Activated B cell treated with CpG ODN at 0.5 μM for 24 hours (primary cell): ENCODE measurements at regions of chr1 and their contacts with region 1.

Region 1: GRCh38 chr1:103514920-103515503 is 10.5 kb upstream of the RNPC3 start:
- DNase-seq: no peak
- ATAC-seq: peak; percentile 73
- H3K4me3 Mint-ChIP-seq: no peak overlapping the region
- H3K27ac Mint-ChIP-seq: no peak overlapping the region
- H3K4me1 Mint-ChIP-seq: peaks cover 7% of the 10 kb centered on the region
- H3K27me3 Mint-ChIP-seq: no peaks in the 10 kb centered on the region
- CTCF ChIP-seq: peak; percentile 68

Region 2: DNA sequence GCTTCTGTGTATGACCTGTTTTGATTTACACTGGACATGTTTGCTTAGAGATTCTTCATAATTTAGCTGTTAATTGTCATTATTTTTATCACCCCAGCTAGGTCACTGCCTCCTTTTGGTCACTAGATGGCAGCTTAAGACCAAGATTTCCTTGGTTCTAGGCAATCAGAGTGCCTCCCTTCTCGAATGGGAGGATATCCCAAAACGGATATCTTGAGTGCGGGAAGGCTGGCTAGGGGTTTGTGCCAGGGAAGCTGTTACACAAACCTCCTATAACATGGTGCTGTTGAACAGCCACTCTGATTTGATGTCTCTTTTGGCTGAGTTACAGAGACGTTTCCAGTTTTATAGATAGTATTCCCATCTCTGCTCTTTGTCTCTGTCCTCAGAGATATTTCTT is 1994.7 kb before region 1 on chr1:
- CTCF ChIA-PET with region 1: interaction called, 4 read pairs
- POLR2A ChIA-PET with region 1: no interaction called
- intact Hi-C with region 1: loop called (anchors 1 kb)
- DNase-seq: no peak
- ATAC-seq: no peak
- H3K4me3 Mint-ChIP-seq: no peak overlapping the region
- H3K27ac Mint-ChIP-seq: no peak overlapping the region
- H3K4me1 Mint-ChIP-seq: peaks cover 6% of the 10 kb centered on the region
- H3K27me3 Mint-ChIP-seq: peaks cover 11% of the 10 kb centered on the region
- CTCF ChIP-seq: no peak

Region 3: GRCh38 chr1:102550729-102551384 is 964.2 kb before region 1 on chr1:
- CTCF ChIA-PET with region 1: no interaction called
- POLR2A ChIA-PET with region 1: no interaction called
- intact Hi-C with region 1: loop called (anchors 2 kb)
- DNase-seq: no peak
- ATAC-seq: no peak
- H3K4me3 Mint-ChIP-seq: no peak overlapping the region
- H3K27ac Mint-ChIP-seq: no peak overlapping the region
- H3K4me1 Mint-ChIP-seq: no peaks in the 10 kb centered on the region
- H3K27me3 Mint-ChIP-seq: no peaks in the 10 kb centered on the region
- CTCF ChIP-seq: no peak

Region 4: DNA sequence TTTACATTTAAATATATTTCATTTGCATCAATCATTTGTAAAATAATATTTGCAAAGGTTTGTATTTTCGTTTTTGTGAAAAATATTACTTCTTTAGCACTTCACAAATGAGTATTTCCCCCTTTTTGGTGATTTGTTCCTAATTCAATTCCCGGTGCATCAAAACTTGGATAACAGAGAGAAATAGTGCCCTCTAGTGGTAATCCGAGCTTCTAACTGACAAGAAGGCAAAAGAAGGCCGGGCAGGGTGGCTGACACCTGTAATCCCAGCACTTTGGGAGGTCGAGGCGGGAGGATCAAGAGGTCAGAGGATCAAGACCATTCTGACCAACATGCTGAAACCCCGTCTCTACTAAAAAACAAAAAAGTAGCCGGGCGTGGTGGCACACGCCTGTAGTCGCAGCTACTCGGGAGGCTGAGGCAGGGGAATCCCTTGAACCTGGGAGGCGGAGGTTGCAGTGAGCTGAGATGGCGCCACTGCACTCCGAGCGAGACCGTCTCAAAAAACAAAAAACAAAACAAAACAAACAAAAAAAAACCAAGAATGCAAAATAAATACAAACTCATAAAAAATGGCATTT is 544.4 kb before region 1 on chr1:
- CTCF ChIA-PET with region 1: no interaction called
- POLR2A ChIA-PET with region 1: no interaction called
- intact Hi-C with region 1: loop called (anchors 10 kb)
- DNase-seq: no peak
- ATAC-seq: no peak
- H3K4me3 Mint-ChIP-seq: no peak overlapping the region
- H3K27ac Mint-ChIP-seq: no peak overlapping the region
- H3K4me1 Mint-ChIP-seq: no peaks in the 10 kb centered on the region
- H3K27me3 Mint-ChIP-seq: no peaks in the 10 kb centered on the region
- CTCF ChIP-seq: no peak

Region 5: GRCh38 chr1:103106426-103107341 is 408.3 kb before region 1 on chr1:
- CTCF ChIA-PET with region 1: interaction called, 5 read pairs
- POLR2A ChIA-PET with region 1: no interaction called
- intact Hi-C with region 1: loop called (anchors 1 kb)
- DNase-seq: no peak
- ATAC-seq: no peak
- H3K4me3 Mint-ChIP-seq: no peak overlapping the region
- H3K27ac Mint-ChIP-seq: no peak overlapping the region
- H3K4me1 Mint-ChIP-seq: peaks cover 15% of the 10 kb centered on the region
- H3K27me3 Mint-ChIP-seq: peaks cover 15% of the 10 kb centered on the region
- CTCF ChIP-seq: no peak

Region 6: GRCh38 chr1:103197216-103197615 is 317.8 kb before region 1 on chr1:
- CTCF ChIA-PET with region 1: no interaction called
- POLR2A ChIA-PET with region 1: no interaction called
- intact Hi-C with region 1: no loop called
- DNase-seq: no peak
- ATAC-seq: no peak
- H3K4me3 Mint-ChIP-seq: no peak overlapping the region
- H3K27ac Mint-ChIP-seq: no peak overlapping the region
- H3K4me1 Mint-ChIP-seq: no peaks in the 10 kb centered on the region
- H3K27me3 Mint-ChIP-seq: no peaks in the 10 kb centered on the region
- CTCF ChIP-seq: no peak

Region 7: GRCh38 chr1:103333181-103333580 is 181.8 kb before region 1 on chr1:
- CTCF ChIA-PET with region 1: no interaction called
- POLR2A ChIA-PET with region 1: no interaction called
- intact Hi-C with region 1: no loop called
- DNase-seq: no peak
- ATAC-seq: no peak
- H3K4me3 Mint-ChIP-seq: no peak overlapping the region
- H3K27ac Mint-ChIP-seq: no peak overlapping the region
- H3K4me1 Mint-ChIP-seq: no peaks in the 10 kb centered on the region
- H3K27me3 Mint-ChIP-seq: no peaks in the 10 kb centered on the region
- CTCF ChIP-seq: no peak